GM10248 (cell line): ENCODE measurements at regions of chr22 and their contacts with region 1.

Region 1: GRCh38 chr22:42649246-42650099 is at the start of gene CYB5R3:
- DNase-seq: peak; percentile 95
- CTCF ChIP-seq: no peak

Region 2: DNA sequence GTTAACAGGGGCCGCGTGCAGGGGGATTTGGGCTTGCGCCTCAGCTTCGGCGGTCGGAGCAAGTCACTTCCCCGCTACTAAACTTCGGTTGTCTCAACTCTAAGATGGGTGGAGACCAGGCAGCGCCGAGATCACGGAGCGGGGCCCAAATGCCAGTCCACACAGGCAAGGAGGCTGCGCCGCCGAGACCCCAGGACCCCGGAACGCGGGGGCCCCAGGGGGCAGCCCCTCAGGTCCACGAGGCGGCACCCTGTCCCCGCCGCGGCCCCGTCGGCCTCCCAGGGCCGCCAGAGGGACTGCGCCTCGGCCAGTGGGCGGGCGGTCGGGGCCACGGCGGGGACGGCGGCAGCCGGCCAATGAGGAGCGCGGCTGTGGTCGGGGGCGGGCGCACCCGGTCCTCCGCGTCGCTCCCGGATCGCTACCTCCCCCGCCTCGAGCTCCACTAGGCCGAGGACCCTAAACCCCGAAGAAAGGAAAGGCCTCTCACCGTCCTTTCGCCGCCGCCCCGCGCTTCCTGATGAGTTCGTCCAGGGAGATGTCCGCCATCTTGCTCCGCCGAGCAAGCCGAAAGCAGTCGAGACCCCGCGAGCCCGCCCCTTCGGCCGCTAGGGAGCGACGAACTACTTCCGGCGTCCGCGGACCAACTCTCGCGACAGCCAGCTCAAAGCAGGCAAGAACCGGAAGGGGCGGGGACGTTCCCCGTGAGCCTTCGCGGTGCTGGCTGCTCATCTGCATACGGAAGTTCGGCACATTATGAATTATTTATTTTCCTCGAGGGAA is 35.0 kb before region 1 on chr22 and contains the start of gene POLDIP3:
- CTCF ChIA-PET with region 1: interaction called, 3 read pairs
- POLR2A ChIA-PET with region 1: interaction called, 17 read pairs
- DNase-seq: peak; percentile 98
- CTCF ChIP-seq: peak; percentile 31

Region 3: GRCh38 chr22:42621505-42622002 is 27.9 kb before region 1 on chr22:
- CTCF ChIA-PET with region 1: interaction called, 61 read pairs
- POLR2A ChIA-PET with region 1: no interaction called
- DNase-seq: peak; percentile 88
- CTCF ChIP-seq: peak; percentile 90

Region 4: GRCh38 chr22:42662114-42663021 is 12.9 kb after region 1 on chr22:
- CTCF ChIA-PET with region 1: interaction called, 13 read pairs
- POLR2A ChIA-PET with region 1: interaction called, 6 read pairs
- DNase-seq: peak; percentile 86
- CTCF ChIP-seq: peak; percentile 87

Region 5: DNA sequence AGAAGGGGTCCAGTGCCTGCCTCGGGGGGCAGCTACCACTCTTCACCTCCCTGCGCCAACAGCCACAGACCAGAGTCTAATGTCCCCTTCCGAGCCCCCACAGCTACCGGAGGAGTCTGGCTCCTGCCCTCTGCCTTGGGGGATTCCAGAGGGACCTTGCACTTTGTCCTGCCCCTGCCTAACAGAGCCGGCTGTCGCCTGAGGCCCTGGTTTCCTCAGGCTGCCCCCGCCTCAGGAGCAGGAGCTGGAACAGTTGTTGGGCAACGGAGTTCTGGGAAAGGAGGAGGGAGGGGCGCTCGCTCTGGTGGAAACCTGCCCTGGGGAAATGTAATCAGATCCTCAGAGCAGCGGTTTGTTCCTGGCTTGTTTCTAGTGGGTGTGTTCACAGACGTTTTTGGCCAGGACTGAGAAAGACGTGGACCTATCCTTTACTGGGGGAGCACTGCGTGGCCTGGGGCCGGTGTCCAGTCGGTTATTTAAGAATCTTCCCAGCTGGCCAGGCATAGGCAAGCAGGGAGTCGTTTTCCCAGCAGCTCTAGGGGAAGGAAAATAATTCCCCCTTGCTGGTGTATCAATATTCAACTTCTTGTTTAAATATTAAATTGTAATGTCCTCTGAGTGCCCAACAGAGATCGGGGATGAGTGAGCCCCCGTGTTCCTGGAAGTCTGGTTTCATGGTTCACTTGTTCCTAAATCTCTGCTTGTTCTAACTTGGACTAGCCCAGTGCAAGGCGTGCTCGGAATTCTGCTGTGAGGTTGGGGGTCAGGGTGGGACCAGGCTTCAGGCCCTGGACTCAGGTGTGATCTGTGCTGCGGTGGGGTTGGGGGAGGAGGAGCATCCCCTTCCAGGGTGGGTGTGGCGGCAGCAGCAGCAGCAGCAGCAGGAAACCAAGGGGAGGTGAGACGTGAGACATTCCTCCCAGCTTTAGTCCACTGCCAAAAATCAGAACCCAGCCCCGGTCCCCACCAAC is 39.1 kb after region 1 on chr22:
- CTCF ChIA-PET with region 1: no interaction called
- POLR2A ChIA-PET with region 1: no interaction called
- DNase-seq: no peak
- CTCF ChIP-seq: no peak